Activated CD4-positive, alpha-beta T cell treated with anti-CD3 and anti-CD28 coated beads, Interleukin-2, amount 10 ng/mL, durations not matched to agents 7 days and 5 days (primary cell): ENCODE measurements at regions of chr17 and their contacts with region 1.

Region 1: GRCh38 chr17:76121932-76122430 is 18.4 kb upstream of the EXOC7 start:
- DNase-seq: no peak
- H3K4me3 Mint-ChIP-seq: peak overlapping the region; percentile 10
- H3K27ac Mint-ChIP-seq: peak overlapping the region; percentile 83
- H3K4me1 Mint-ChIP-seq: peaks cover 27% of the 10 kb centered on the region
- H3K27me3 Mint-ChIP-seq: no peaks in the 10 kb centered on the region

Region 2: DNA sequence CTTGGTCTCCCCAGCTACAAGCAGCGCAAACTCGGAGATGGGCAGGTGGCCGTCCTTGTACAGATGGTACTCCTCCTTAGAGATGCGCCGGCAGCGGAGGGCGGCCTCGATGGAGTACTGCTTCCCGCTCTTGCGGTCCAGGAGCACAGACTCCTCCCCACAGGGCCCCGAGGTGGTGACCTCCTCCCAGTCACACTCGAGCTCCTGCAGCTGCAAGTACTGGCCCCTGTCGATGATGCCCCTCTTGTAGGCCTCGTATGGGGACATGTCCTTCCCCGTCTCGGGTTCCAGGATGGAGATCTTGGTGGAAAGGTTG is 114.2 kb before region 1 on chr17:
- CTCF ChIA-PET with region 1: no interaction called
- POLR2A ChIA-PET with region 1: no interaction called
- DNase-seq: no peak
- H3K4me3 Mint-ChIP-seq: no peak overlapping the region
- H3K27ac Mint-ChIP-seq: no peak overlapping the region
- H3K4me1 Mint-ChIP-seq: peaks cover 2% of the 10 kb centered on the region
- H3K27me3 Mint-ChIP-seq: no peaks in the 10 kb centered on the region

Region 3: GRCh38 chr17:76036497-76037261 is 85.3 kb before region 1 on chr17:
- CTCF ChIA-PET with region 1: no interaction called
- POLR2A ChIA-PET with region 1: no interaction called
- DNase-seq: no peak
- H3K4me3 Mint-ChIP-seq: no peak overlapping the region
- H3K27ac Mint-ChIP-seq: no peak overlapping the region
- H3K4me1 Mint-ChIP-seq: no peaks in the 10 kb centered on the region
- H3K27me3 Mint-ChIP-seq: no peaks in the 10 kb centered on the region

Region 4: GRCh38 chr17:76103274-76104139 is 18.5 kb before region 1 on chr17 and contains the start of gene EXOC7:
- CTCF ChIA-PET with region 1: interaction called, 10 read pairs
- POLR2A ChIA-PET with region 1: no interaction called
- DNase-seq: peak; percentile 93
- H3K4me3 Mint-ChIP-seq: peak within 1 kb of the TSS; percentile 96
- H3K27ac Mint-ChIP-seq: peak within 1 kb of the TSS; percentile 96
- H3K4me1 Mint-ChIP-seq: peaks cover 32% of the 10 kb centered on the region
- H3K27me3 Mint-ChIP-seq: no peaks in the 10 kb centered on the region
- total RNA-seq, gene EXOC7: 140 to 147 TPM

Region 5: GRCh38 chr17:76132574-76133338 is 10.8 kb after region 1 on chr17:
- CTCF ChIA-PET with region 1: interaction called, 17 read pairs
- POLR2A ChIA-PET with region 1: no interaction called
- DNase-seq: no peak
- H3K4me3 Mint-ChIP-seq: no peak overlapping the region
- H3K27ac Mint-ChIP-seq: no peak overlapping the region
- H3K4me1 Mint-ChIP-seq: peaks cover 29% of the 10 kb centered on the region
- H3K27me3 Mint-ChIP-seq: no peaks in the 10 kb centered on the region

Region 6: DNA sequence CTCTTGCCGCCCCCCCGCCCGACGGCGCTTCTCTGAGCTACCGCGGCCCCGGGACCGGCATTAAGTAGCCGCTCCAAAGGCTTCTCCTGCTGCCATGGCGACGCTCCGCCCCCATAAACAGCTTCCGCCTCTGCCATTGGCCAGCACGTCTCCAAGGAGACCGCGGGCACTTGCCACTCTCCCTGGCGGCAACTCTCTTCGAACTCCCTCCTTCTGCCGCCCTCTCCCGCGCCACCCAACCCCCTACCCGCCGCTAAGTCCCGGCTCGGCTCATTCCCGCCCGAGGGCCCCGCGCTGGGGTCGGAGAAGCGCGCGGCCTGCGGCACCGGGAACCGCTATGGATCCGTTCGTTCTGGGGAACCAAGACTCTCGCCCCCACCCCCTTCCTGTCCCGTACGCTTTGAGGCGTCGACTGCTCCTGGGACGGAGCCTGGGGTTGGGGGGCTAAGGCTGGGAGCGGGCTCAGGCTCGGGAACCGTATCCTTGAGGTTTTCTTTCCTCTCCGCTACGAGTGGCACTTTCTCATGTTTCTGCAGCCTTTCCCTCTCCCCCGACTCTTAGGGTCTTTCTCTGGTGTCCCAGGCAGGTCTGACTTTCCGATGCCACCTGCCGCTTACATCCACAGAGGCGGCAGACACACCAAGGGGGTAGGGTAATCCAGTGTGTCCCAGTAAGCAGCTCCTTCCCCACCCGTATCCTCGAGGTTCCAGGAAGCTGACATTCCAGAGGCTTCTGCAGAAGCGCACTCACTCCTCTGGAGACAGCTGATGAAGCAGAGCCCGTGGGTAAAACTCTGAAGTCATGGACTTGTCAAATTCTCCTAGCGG is 19.4 kb after region 1 on chr17 and contains the start of gene FOXJ1:
- CTCF ChIA-PET with region 1: interaction called, 18 read pairs
- POLR2A ChIA-PET with region 1: no interaction called
- DNase-seq: peak; percentile 92
- H3K4me3 Mint-ChIP-seq: peak within 1 kb of the TSS; percentile 71
- H3K27ac Mint-ChIP-seq: peak within 1 kb of the TSS; percentile 69
- H3K4me1 Mint-ChIP-seq: peaks cover 58% of the 10 kb centered on the region
- H3K27me3 Mint-ChIP-seq: peaks cover 15% of the 10 kb centered on the region
- total RNA-seq, gene FOXJ1: 0.20 to 0.48 TPM

Region 7: GRCh38 chr17:76182016-76182764 is 60.2 kb after region 1 on chr17:
- CTCF ChIA-PET with region 1: interaction called, 14 read pairs
- POLR2A ChIA-PET with region 1: interaction called, 3 read pairs
- DNase-seq: peak; percentile 96
- H3K4me3 Mint-ChIP-seq: peak overlapping the region; percentile 8
- H3K27ac Mint-ChIP-seq: peak overlapping the region; percentile 93
- H3K4me1 Mint-ChIP-seq: peaks cover 69% of the 10 kb centered on the region
- H3K27me3 Mint-ChIP-seq: no peaks in the 10 kb centered on the region

Region 8: GRCh38 chr17:76271669-76272540 is 149.9 kb after region 1 on chr17:
- CTCF ChIA-PET with region 1: interaction called, 34 read pairs
- POLR2A ChIA-PET with region 1: interaction called, 6 read pairs
- DNase-seq: peak; percentile 80
- H3K4me3 Mint-ChIP-seq: peak overlapping the region; percentile 66
- H3K27ac Mint-ChIP-seq: peak overlapping the region; percentile 92
- H3K4me1 Mint-ChIP-seq: peaks cover 72% of the 10 kb centered on the region
- H3K27me3 Mint-ChIP-seq: no peaks in the 10 kb centered on the region